Activated CD8-positive, alpha-beta T cell treated with anti-CD3 and anti-CD28 coated beads, Interleukin-2, amount 10 ng/mL, durations not matched to agents 7 days and 5 days (primary cell): ENCODE measurements at regions of chr21 and their contacts with region 1.

Region 1: DNA sequence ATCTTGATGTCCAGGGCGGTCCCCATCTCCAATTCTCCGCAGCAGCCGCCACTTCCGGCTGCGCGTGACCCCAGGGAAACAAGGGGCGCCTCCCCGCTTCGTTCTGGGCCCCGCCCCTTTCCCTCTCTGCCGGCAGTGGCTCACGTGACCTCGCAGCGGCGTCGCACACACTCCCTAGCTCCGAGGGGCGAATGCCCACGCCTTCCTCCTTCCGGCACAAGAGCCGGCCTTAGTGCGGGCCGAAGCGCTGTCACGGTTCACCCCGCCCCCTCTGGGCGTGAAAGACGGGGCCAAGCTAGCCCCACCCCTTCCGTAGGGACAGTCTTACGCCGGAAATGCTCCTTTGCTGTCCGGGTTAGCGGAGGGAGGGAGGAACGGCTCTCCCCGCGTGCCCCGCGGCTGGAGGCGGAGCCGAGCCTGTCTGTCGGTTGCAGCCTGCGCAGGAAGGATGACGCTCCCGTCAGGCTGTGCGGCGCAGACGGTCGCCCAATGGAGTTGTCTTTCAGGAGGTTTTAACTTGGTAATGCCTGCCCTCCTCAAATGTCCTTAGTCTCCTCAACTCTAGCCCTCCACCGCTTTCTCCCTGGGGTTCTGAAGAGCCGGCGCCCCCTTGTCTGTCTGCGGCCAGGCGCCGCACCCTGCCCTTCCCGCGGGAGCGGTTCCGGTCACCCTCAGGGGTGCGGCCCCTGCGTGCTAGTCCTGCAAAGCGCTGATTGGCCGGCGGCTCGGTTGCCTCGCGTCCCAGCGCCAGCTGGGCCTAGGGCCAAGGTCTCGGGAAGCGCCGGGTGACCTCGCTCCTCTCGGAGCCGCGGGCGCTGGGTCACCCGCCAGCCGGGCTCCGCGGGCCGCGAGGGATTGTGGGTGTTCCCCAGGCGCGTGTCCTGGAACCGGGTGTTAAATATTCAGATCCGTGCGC is at the start of gene VPS26C:
- DNase-seq: peak; percentile 99
- ATAC-seq: peak; percentile 94
- H3K4me3 Mint-ChIP-seq: peak within 1 kb of the TSS; percentile 95
- H3K27ac Mint-ChIP-seq: peak within 1 kb of the TSS; percentile 99
- H3K4me1 Mint-ChIP-seq: peaks cover 40% of the 10 kb centered on the region
- H3K27me3 Mint-ChIP-seq: no peaks in the 10 kb centered on the region
- total RNA-seq, gene VPS26C: 96.2 to 98.7 TPM

Region 2: GRCh38 chr21:37199057-37199924 is 68.2 kb before region 1 on chr21:
- CTCF ChIA-PET with region 1: no interaction called
- POLR2A ChIA-PET with region 1: interaction called, 11 read pairs
- DNase-seq: no peak
- ATAC-seq: no peak
- H3K4me3 Mint-ChIP-seq: no peak overlapping the region
- H3K27ac Mint-ChIP-seq: no peak overlapping the region
- H3K4me1 Mint-ChIP-seq: no peaks in the 10 kb centered on the region
- H3K27me3 Mint-ChIP-seq: no peaks in the 10 kb centered on the region

Region 3: DNA sequence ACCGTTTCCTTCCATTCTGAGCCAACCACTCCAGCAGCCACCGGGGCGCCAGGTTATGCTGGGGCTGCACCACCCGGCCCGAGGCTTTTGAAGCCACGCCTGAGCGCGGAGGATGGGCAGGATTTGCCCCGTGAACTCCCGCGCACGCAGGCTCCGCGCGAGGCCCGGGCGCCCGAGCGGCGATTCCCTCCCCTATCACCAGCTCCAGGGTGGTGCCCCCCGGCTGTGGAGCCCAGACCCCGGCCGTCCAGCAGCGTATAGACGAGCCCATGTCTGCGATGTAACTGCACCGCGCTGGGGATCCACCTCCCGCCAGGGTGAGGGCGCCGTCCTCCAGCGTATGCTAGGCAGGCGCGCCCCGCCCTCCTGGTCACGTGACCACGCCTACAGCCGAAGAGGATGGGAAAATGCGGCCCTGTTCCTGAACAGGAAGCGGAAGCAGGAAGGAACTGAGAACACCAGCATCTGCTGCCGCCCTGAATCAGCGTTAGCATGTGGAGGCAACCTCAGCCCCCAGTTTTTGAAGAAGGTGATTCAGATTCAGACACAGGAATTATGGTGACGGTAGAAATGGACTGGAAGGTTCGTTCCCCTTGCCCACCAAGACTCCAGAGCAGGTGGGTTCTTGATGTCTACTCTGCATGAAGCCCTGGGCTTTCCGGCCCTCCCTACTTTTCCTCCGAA is 46.4 kb before region 1 on chr21:
- CTCF ChIA-PET with region 1: interaction called, 5 read pairs
- POLR2A ChIA-PET with region 1: interaction called, 11 read pairs
- DNase-seq: peak; percentile 96
- ATAC-seq: peak; percentile 81
- H3K4me3 Mint-ChIP-seq: peak overlapping the region; percentile 88
- H3K27ac Mint-ChIP-seq: peak overlapping the region; percentile 91
- H3K4me1 Mint-ChIP-seq: peaks cover 63% of the 10 kb centered on the region
- H3K27me3 Mint-ChIP-seq: no peaks in the 10 kb centered on the region

Region 4: GRCh38 chr21:37244501-37245083 is 22.9 kb before region 1 on chr21:
- CTCF ChIA-PET with region 1: interaction called, 8 read pairs
- POLR2A ChIA-PET with region 1: interaction called, 23 read pairs
- DNase-seq: peak; percentile 71
- ATAC-seq: peak; percentile 89
- H3K4me3 Mint-ChIP-seq: peak overlapping the region; percentile 78
- H3K27ac Mint-ChIP-seq: peak overlapping the region; percentile 94
- H3K4me1 Mint-ChIP-seq: peaks cover 88% of the 10 kb centered on the region
- H3K27me3 Mint-ChIP-seq: no peaks in the 10 kb centered on the region

Region 5: DNA sequence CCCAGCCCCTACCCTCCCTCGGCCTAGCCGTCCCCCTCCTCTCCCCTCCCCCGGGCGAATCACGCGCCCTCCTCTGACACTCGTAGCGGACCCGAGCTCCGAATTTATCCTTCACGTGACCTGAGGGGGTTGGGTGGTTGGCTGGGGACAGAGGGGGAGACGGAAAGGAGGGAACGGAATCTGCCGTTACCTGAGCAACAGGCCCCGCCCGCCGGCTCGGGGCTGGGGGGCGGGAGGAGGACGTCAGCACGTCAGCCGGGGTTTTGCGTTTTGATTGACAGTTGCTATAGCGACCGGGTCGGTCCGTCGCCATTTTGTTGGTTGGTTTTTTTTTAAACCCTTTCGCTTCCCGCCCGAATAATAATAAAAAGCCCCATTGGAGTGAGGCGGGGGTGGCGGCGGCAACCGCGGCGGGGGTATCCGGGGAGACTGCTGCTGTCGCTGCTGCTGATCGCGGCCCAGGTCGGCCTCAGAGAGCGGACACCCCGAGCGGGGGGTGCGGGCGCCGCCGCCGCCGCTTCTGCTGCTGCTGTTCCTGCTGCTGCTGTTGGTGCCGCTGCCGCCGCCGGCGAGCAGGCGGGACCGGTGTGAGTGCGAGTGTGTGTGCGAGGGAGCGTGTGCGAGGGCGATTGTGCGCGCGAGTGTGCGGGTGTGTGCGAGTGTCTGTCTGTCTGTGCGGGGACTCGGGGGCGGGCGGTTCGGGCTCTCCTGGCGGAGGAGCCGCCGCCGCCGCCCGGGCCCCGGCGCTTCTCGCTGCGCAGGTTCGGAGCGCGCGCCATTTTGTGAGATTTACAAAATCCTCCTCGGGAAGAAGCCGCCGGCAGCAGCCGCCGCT is 99.2 kb after region 1 on chr21 and contains the start of gene DYRK1A:
- CTCF ChIA-PET with region 1: interaction called, 3 read pairs
- POLR2A ChIA-PET with region 1: interaction called, 39 read pairs
- DNase-seq: peak; percentile 99
- ATAC-seq: peak; percentile 81
- H3K4me3 Mint-ChIP-seq: peak within 1 kb of the TSS; percentile 98
- H3K27ac Mint-ChIP-seq: peak within 1 kb of the TSS; percentile 100
- H3K4me1 Mint-ChIP-seq: peaks cover 47% of the 10 kb centered on the region
- H3K27me3 Mint-ChIP-seq: no peaks in the 10 kb centered on the region
- total RNA-seq, gene DYRK1A: 83.2 to 86.1 TPM

Region 6: DNA sequence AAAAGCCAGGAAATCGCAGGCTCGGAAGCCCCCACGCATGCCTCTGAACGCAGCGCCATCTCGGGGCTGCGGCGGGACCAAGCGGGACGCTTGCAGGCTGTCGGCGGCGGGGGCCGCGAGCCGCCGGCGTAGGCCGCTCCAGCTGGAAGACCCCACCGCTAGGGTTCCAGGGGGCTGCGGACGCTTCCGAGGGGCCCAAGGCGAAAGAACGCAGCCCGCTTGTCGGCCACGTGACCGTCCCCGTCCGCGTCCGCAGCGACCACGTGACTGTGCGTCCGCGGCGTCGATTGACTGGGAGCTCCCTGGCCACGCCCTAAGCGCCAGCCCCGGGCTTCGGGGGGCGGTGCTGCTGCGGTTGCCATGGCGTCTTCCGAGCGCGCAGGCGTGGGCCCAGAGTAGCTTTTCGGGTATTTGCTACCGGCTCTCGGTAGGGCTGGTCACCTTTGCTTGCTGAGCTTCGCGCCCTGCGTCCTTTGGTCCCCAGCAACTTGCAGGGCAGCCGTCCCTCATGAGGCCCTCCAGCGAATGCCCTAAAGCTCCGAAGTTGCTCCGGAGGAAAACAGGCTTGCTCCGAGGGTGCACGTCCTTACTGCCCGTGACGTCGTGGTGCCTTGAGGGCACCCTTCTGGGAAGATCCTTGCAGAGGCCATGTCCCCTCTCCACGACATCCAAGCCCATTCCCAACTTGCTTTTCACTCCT is 296.3 kb after region 1 on chr21:
- CTCF ChIA-PET with region 1: interaction called, 3 read pairs
- POLR2A ChIA-PET with region 1: interaction called, 17 read pairs
- DNase-seq: peak; percentile 94
- ATAC-seq: peak; percentile 90
- H3K4me3 Mint-ChIP-seq: peak overlapping the region; percentile 84
- H3K27ac Mint-ChIP-seq: peak overlapping the region; percentile 98
- H3K4me1 Mint-ChIP-seq: peaks cover 34% of the 10 kb centered on the region
- H3K27me3 Mint-ChIP-seq: no peaks in the 10 kb centered on the region